Activated CD8-positive, alpha-beta T cell treated with anti-CD3 and anti-CD28 coated beads for 36 hours (primary cell): ENCODE measurements at regions of chrX and their contacts with region 1.

Region 1: DNA sequence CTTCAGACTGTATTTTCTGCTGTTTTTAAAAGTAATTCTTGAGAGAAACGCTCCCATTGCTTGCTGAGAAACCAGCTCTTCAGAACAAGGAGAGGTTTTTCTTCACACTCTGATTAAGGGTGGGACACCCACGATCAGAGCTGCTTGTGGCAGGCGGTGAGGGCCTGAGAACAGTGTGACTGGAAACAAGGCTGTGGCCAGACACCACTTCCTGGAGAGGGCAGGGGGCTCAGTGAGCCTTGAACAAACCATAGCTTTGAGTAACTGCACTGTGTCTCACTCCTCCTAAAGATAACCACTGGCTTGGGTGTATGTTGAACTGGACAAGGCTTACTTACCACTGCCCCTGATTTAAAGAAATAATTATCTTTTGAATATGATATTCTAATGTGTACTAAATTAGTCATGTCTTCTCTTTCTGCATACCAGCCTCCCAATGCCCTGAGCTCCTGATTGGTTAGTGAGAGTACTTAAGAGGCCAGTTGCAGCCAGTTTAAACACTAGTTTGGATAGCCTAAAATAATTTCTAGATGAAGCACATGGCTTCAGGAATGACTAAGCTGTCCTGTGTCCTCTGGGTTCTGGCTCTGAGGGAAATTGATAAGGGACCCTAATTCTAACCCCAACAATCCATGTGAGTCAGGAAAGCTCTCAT is 3.7 kb upstream of the GPR82 start:
- DNase-seq: peak; percentile 80
- ATAC-seq: peak; percentile 86
- H3K4me3 Mint-ChIP-seq: no peak overlapping the region
- H3K27ac Mint-ChIP-seq: peak overlapping the region; percentile 67
- H3K4me1 Mint-ChIP-seq: peaks cover 59% of the 10 kb centered on the region
- H3K27me3 Mint-ChIP-seq: no peaks in the 10 kb centered on the region
- CTCF ChIP-seq: no peak

Region 2: GRCh38 chrX:41526925-41527324 is 193.3 kb before region 1 on chrX:
- CTCF ChIA-PET with region 1: no interaction called
- POLR2A ChIA-PET with region 1: no interaction called
- intact Hi-C with region 1: no loop called
- DNase-seq: peak; percentile 30
- ATAC-seq: peak; percentile 80
- H3K4me3 Mint-ChIP-seq: no peak overlapping the region
- H3K27ac Mint-ChIP-seq: peak overlapping the region; percentile 62
- H3K4me1 Mint-ChIP-seq: peaks cover 20% of the 10 kb centered on the region
- H3K27me3 Mint-ChIP-seq: no peaks in the 10 kb centered on the region
- CTCF ChIP-seq: no peak

Region 3: GRCh38 chrX:41664307-41665299 is 55.6 kb before region 1 on chrX:
- CTCF ChIA-PET with region 1: no interaction called
- POLR2A ChIA-PET with region 1: no interaction called
- intact Hi-C with region 1: loop called (anchors 5 kb)
- DNase-seq: peak; percentile 9
- ATAC-seq: peak; percentile 55
- H3K4me3 Mint-ChIP-seq: no peak overlapping the region
- H3K27ac Mint-ChIP-seq: peak overlapping the region; percentile 89
- H3K4me1 Mint-ChIP-seq: peaks cover 52% of the 10 kb centered on the region
- H3K27me3 Mint-ChIP-seq: no peaks in the 10 kb centered on the region
- CTCF ChIP-seq: no peak

Region 4: DNA sequence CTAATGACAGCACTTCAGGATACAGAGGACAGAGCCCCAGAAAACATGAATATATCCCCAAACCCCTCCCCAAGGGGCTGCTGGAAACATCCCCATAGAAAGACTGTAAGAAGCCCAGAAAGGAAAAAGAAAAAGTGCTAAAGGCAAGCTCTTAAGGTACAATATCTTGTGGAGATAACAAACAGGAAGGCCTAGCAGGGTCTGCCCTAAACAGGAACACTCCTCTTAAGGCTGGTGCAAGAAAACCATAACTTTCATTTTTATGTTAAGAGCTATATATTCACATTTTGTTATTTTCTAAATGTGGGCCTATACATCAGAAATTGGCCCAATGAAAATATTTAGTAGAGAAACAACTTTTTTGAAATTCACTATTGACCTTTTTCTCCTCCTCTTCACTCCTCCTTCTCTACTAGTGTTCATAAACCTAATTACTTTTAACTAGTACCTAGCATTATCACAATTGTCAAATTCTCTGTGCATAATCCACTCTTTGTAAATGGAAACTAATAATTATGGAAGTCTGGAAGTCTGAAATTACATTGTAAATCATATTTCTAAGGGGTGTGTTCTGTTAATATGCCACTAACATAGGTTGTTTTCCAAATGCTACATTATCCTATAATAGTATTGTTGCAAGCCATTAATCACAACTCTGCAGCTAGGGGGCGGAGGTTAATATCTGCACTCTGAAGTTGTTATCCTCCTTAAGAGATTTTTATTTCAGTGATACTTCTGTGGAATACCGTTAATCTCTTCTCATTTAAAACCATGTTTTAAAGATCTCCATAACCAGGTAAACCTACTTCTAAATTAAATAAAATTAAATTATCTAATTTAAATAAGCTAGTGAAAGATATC is 143.3 kb after region 1 on chrX:
- CTCF ChIA-PET with region 1: no interaction called
- POLR2A ChIA-PET with region 1: no interaction called
- intact Hi-C with region 1: no loop called
- DNase-seq: no peak
- ATAC-seq: no peak
- H3K4me3 Mint-ChIP-seq: no peak overlapping the region
- H3K27ac Mint-ChIP-seq: peak overlapping the region; percentile 86
- H3K4me1 Mint-ChIP-seq: peaks cover 54% of the 10 kb centered on the region
- H3K27me3 Mint-ChIP-seq: no peaks in the 10 kb centered on the region
- CTCF ChIP-seq: no peak